ENCODE measurements at regions of chr2 and their contacts with region 1.

Region 1: GRCh38 chr2:166516712-166517303 is 22.8 kb upstream of the SCN7A start:
- DNase-seq: no peak

Region 2: DNA sequence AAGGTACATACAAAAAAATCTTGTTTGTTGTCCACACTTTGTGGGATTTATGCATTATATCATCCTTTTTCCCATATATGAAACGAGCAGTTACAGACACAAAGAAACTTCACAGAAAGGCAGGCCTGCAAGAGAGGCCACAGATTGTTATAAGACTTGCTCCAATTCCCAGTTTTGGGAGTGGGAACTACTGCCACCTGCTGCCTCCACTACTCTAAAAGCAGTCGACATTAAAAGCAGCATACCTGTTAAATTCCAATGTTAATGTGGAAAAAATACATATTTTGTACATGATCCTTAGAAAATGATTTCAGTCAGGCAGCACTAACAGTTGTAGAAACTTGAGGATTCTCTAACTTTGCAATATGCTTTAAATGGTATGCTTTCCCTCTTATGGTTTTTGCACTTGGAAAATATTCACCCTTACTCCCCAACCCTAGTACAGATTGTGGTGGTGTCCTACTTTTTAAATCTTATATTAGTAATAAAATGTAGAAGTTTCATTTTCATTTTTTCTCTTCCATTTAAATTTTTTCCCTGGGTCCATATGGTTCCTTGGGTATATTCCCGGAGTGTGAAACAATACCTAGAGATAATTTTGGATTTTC is 1599.4 kb before region 1 on chr2:
- intact Hi-C with region 1: no loop called
- DNase-seq: no peak

Region 3: GRCh38 chr2:166361351-166362153 is 155.3 kb before region 1 on chr2:
- intact Hi-C with region 1: loop called (anchors 5 kb)
- DNase-seq: no peak

Measured in cardiac septum (tissue), 1 donor.